Cardiac septum (tissue), 1 donor: ENCODE measurements at regions of chr1 and their contacts with region 1.

Region 1: GRCh38 chr1:64136752-64137411 is 66.5 kb upstream of the UBE2U start:
- DNase-seq: no peak

Region 2: GRCh38 chr1:63615768-63616420 is 521.0 kb before region 1 on chr1:
- intact Hi-C with region 1: loop called (anchors 5 kb)
- DNase-seq: no peak

Region 3: GRCh38 chr1:63691701-63692425 is 445.0 kb before region 1 on chr1:
- intact Hi-C with region 1: loop called (anchors 2 kb)
- DNase-seq: no peak

Region 4: DNA sequence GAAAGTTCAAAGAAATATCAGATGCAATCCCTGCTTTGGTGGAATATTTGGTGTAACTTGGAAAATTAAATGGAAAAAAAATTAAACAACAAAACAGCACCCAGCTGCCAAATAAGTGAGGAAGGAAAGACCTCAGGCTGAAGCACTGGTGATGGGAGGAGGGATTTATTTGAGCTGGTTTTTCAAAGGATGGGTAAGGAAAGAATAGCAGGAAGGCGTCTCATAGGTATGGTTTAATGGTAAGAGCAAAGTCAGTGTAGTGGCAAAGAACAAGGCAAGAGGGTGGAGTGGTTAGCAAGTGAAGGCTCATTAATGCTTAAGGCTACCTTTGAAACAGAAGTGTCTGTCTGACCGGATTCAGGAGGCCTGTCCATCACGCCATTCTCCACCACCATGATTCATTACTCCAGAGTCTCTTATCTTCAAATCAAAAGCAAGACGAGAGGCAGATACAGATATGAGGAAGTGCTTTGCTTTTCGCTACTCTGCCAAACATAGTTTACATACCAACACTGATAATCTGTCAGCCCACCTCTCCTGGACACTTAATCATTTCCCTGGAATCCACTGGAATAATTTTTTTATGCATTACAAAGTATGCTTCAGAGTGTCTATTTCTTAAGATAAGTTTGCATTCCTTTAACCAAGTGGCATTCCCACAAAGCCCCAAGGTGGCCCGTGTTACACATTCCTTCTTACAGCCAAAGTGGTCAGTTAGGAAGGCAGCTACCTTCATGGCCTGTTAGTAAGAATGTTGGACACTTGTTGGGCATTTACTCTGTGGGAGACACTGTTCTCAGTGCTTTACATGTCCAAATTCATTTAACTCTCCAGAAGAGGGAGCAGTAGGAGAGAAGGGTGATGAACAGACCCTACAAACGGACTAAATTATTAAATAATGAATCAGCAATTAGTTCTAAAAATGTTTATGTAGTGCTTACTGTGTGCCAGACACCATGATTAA is 216.4 kb before region 1 on chr1:
- intact Hi-C with region 1: loop called (anchors 5 kb)
- DNase-seq: no peak

Region 5: GRCh38 chr1:63935143-63935542 is 201.7 kb before region 1 on chr1:
- intact Hi-C with region 1: loop called (anchors 5 kb)
- DNase-seq: no peak

Region 6: GRCh38 chr1:64042331-64043100 is 94.4 kb before region 1 on chr1:
- intact Hi-C with region 1: loop called (anchors 5 kb)
- DNase-seq: no peak

Region 7: DNA sequence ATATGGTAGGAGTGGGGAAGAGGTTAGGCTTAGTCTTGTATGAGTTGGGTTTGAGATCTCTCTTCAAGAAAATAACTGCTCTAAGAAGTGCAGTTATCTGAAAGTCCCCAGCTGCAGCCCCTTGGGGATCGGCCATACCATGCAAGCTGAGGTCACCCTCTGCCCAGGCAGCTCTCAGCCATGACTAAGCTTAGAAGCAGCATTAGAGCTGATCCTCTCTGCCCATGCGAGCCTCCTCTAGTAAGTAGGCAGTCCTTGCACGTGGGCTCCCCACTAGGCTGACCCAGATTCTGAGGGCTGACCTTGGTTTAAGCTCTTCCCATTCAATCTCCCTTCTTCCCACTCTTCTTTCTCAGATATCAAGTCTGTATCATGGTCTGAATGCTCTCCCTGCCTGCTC is 54.4 kb before region 1 on chr1:
- intact Hi-C with region 1: no loop called
- DNase-seq: no peak

Region 8: DNA sequence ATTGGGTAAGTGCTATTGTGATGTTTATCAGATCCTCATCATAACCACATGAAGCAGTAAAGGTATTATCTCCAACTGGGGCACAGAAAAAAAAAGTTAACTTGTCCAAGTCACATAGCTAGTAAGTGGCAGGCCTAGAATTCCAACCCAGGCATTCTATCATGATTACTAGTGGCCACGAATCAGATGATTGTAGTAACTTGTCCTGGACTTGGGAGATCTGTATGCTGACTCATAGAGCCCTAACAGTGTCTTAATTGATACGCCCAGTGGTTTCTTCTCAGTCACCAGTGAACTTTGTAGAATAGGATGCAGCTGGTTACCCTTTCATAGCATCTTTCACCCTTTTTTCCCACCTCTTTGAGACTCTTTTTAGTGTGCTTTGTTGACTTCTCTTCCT is 24.6 kb before region 1 on chr1:
- intact Hi-C with region 1: no loop called
- DNase-seq: no peak